CD8-positive, alpha-beta T cell (primary cell): ENCODE measurements at regions of chr12 and their contacts with region 1.

Region 1: DNA sequence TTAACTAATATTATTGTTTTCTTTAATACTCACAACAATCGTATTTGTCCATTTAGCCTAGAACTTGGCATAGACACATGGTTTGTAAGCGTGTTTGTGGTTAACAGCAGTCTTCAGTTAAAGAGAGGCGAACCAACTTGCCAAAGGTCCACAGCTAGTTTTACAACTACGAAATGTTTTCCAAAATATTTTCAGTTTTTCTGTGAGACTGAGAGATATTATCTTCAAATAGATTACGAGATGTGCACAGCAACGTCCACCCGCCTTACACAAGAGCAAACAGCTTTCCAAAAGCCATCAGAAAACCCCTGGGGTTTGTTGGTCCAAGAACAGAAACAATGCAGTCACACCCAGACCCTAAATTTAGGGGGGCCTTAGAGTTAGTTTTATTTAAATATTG is 58.6 kb upstream of the RASSF3 start:
- DNase-seq: no peak
- ATAC-seq: no peak
- H3K4me3 ChIP-seq: no peak overlapping the region
- H3K4me3 Mint-ChIP-seq: no peak overlapping the region
- H3K27ac ChIP-seq: no peak overlapping the region
- H3K27ac Mint-ChIP-seq: no peak overlapping the region
- H3K4me1 ChIP-seq: no peaks in the 10 kb centered on the region
- H3K4me1 Mint-ChIP-seq: peaks cover 8% of the 10 kb centered on the region
- H3K27me3 ChIP-seq: no peaks in the 10 kb centered on the region
- H3K27me3 Mint-ChIP-seq: no peaks in the 10 kb centered on the region
- CTCF ChIP-seq: no peak

Region 2: DNA sequence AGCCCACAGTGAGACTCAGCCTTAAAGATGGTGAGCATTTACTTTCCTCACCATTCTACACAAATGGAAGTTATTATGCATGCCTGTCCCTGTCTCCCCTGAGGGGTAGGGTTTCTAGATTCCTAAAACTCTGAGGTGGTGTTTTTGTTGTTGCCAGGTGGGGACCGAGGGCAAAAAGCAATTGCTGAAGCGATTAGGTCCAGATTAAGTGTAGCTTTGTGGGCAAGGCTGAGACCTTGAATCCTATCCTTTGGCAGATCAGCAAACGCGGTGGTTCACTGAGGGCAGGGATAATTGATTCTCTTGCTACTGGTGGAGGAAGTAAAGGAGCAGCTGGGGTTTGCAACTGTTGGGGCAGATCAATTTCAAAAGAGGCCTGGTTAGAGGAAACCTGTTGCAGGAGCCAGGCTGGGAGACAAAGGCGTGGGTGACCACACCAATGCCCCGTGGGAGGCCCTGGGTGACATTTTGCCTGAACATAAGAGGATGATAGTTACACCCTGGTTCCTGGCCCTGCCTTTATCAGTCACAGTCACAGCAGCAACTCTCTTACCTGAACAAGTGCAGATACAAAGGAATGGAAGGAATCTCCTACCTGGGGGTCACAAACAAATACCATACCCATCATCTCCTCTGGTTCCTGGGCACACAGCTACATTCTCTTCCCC is 15.2 kb after region 1 on chr12:
- CTCF ChIA-PET with region 1: interaction called, 18 read pairs
- POLR2A ChIA-PET with region 1: interaction called, 7 read pairs
- intact Hi-C with region 1: no loop called
- DNase-seq: no peak
- ATAC-seq: no peak
- H3K4me3 ChIP-seq: no peak overlapping the region
- H3K4me3 Mint-ChIP-seq: no peak overlapping the region
- H3K27ac ChIP-seq: no peak overlapping the region
- H3K27ac Mint-ChIP-seq: no peak overlapping the region
- H3K4me1 ChIP-seq: peaks cover 8% of the 10 kb centered on the region
- H3K4me1 Mint-ChIP-seq: peaks cover 27% of the 10 kb centered on the region
- H3K27me3 ChIP-seq: no peaks in the 10 kb centered on the region
- H3K27me3 Mint-ChIP-seq: no peaks in the 10 kb centered on the region
- CTCF ChIP-seq: no peak

Region 3: GRCh38 chr12:64616201-64616600 is 64.5 kb after region 1 on chr12:
- CTCF ChIA-PET with region 1: interaction called, 16 read pairs
- POLR2A ChIA-PET with region 1: interaction called, 6 read pairs
- intact Hi-C with region 1: no loop called
- DNase-seq: peak in 1 of 9 experiments; percentile 29
- ATAC-seq: no peak
- H3K4me3 ChIP-seq: no peak overlapping the region
- H3K4me3 Mint-ChIP-seq: peak overlapping the region; percentile 54
- H3K27ac ChIP-seq: no peak overlapping the region
- H3K27ac Mint-ChIP-seq: peak overlapping the region; percentile 88
- H3K4me1 ChIP-seq: peaks cover 46% of the 10 kb centered on the region
- H3K4me1 Mint-ChIP-seq: peaks cover 71% of the 10 kb centered on the region
- H3K27me3 ChIP-seq: no peaks in the 10 kb centered on the region
- H3K27me3 Mint-ChIP-seq: no peaks in the 10 kb centered on the region
- CTCF ChIP-seq: no peak

Region 4: DNA sequence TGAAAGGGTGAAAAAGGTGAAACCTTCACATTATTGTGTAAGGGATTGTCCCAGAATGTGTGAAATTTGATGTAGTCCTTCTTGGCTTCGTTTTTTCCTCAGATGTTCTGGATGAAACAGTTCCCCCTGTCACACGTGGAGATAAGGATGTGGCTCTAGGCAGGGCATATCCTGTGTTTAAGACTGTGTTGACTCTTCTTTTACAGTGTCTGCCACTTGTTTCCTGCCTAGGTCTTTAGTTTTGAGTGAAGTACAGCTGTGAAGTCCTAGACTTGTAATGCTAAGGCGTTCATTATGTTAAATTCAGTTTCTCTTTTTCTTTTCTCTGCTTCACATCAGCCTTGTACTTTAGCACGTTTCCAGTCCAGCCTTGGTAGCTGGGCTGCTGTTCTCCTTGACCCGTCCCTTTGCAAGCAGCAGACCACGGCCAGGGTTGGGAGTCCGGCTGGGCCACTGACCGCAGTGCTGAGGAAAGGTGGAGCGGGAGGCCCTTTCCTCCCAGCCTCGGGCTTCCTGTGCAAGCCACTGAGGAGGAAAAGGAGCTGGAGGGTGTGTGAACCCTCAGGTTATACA is 117.7 kb after region 1 on chr12:
- CTCF ChIA-PET with region 1: interaction called, 13 read pairs
- POLR2A ChIA-PET with region 1: interaction called, 4 read pairs
- intact Hi-C with region 1: no loop called
- DNase-seq: peak; percentile 18 to 94 (median 57)
- ATAC-seq: peak; percentile 79
- H3K4me3 ChIP-seq: peak overlapping the region; percentile 51 to 57
- H3K4me3 Mint-ChIP-seq: peak overlapping the region; percentile 87
- H3K27ac ChIP-seq: peak overlapping the region; percentile 77 to 94
- H3K27ac Mint-ChIP-seq: peak overlapping the region; percentile 98
- H3K4me1 ChIP-seq: peaks cover 92% of the 10 kb centered on the region
- H3K4me1 Mint-ChIP-seq: peaks cover 90% of the 10 kb centered on the region
- H3K27me3 ChIP-seq: no peaks in the 10 kb centered on the region
- H3K27me3 Mint-ChIP-seq: no peaks in the 10 kb centered on the region
- CTCF ChIP-seq: no peak

Region 5: DNA sequence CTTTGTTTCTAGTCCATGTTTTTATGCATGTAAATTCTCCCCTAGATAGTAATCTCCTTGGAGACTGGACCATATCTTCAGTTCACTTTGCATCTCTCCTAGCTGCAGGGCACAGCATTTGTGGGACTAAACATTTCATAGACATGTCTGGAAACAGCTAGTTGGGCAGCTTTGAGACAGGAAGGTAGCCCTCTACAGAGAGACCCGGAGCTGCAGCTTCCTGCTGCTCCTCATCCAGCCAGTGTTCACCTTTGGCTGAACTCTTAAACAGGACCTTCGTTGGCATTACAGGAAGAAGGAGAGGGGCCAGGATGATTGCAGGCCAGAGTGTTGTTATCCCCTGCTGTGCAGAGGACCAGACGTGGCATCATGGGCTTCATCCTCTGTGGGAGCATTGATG is 154.6 kb after region 1 on chr12:
- CTCF ChIA-PET with region 1: interaction called, 317 read pairs
- POLR2A ChIA-PET with region 1: interaction called, 3 read pairs
- intact Hi-C with region 1: no loop called
- DNase-seq: no peak
- ATAC-seq: no peak
- H3K4me3 ChIP-seq: no peak overlapping the region
- H3K4me3 Mint-ChIP-seq: no peak overlapping the region
- H3K27ac ChIP-seq: no peak overlapping the region
- H3K27ac Mint-ChIP-seq: no peak overlapping the region
- H3K4me1 ChIP-seq: peaks cover 15% of the 10 kb centered on the region
- H3K4me1 Mint-ChIP-seq: peaks cover 12% of the 10 kb centered on the region
- H3K27me3 ChIP-seq: no peaks in the 10 kb centered on the region
- H3K27me3 Mint-ChIP-seq: no peaks in the 10 kb centered on the region
- CTCF ChIP-seq: no peak

Region 6: DNA sequence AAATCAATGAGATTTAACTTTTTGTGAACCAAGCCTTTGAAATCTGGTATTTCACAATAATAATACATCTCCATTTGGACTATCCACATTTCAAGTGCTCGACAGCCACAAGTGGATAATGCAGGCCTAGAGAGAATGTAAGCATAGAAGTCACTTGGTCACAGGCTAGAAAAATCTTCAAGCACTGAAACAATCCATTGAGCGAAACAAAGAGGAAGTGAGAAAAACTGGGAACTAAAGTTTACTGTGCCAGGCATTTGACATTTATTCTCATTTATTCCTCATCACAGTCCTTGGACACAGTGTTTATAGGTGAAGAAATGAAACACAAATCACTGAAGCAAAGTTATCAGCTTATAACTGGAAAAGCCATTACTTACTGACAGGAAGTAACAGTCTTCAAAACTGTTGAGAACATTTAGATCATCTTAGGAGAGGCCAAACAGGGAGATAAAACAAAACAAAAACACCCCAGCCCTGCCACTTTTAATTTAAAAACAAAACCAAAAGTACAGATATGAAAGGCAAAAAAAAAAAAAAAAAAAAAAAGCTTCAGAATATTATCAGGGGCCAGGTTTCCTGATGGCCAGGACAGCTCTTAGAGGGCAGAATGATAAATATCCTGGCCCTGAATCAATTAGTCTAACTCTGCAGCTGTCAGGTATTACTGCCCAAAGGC is 178.3 kb after region 1 on chr12:
- CTCF ChIA-PET with region 1: interaction called, 10 read pairs
- POLR2A ChIA-PET with region 1: no interaction called
- intact Hi-C with region 1: no loop called
- DNase-seq: peak in 2 of 9 experiments; percentile 27 to 59
- ATAC-seq: peak; percentile 52
- H3K4me3 ChIP-seq: peak overlapping the region in 1 of 2 experiments; percentile 12
- H3K4me3 Mint-ChIP-seq: peak overlapping the region; percentile 35
- H3K27ac ChIP-seq: peak overlapping the region in 1 of 2 experiments; percentile 91
- H3K27ac Mint-ChIP-seq: peak overlapping the region; percentile 93
- H3K4me1 ChIP-seq: peaks cover 14% of the 10 kb centered on the region
- H3K4me1 Mint-ChIP-seq: peaks cover 11% of the 10 kb centered on the region
- H3K27me3 ChIP-seq: no peaks in the 10 kb centered on the region
- H3K27me3 Mint-ChIP-seq: no peaks in the 10 kb centered on the region
- CTCF ChIP-seq: no peak

Region 7: GRCh38 chr12:65881965-65882413 is 1330.3 kb after region 1 on chr12:
- CTCF ChIA-PET with region 1: no interaction called
- POLR2A ChIA-PET with region 1: no interaction called
- intact Hi-C with region 1: no loop called
- DNase-seq: peak in 1 of 9 experiments; percentile 3
- ATAC-seq: no peak
- H3K4me3 ChIP-seq: no peak overlapping the region
- H3K4me3 Mint-ChIP-seq: no peak overlapping the region
- H3K27ac ChIP-seq: no peak overlapping the region
- H3K27ac Mint-ChIP-seq: no peak overlapping the region
- H3K4me1 ChIP-seq: no peaks in the 10 kb centered on the region
- H3K4me1 Mint-ChIP-seq: peaks cover 3% of the 10 kb centered on the region
- H3K27me3 ChIP-seq: peaks cover 3 to 4% of the 10 kb centered on the region in 2 experiments
- H3K27me3 Mint-ChIP-seq: peaks cover 23% of the 10 kb centered on the region
- CTCF ChIP-seq: no peak